Astrocyte of the cerebellum (primary cell): ENCODE measurements at regions of chr15 and their contacts with region 1.

Region 1: DNA sequence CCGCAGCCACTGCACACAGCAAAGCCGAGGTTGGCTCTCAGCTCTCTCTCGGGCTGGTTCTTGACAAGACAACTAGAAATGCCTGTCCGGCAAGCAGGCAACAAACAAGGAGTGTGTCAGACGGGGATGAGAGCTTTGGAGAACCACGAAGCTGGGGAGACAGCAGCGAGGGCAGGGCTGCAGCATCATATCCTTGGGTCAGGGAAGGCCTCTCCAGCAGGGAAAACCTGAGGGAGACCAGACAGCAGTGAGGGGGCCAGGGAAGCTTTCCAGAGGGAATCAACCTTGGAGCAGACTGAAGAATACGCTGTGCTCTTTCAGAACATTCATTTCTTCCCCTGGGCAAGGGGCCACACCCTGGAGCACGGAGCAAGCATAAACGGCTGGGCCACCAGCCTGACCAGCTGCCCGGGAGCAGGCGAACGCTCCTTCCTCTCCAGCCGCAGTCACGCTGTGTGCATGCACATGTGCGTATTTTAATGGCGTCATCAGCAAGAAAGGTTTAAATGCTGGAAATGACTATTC is 58.7 kb downstream of the CHSY1 start:
- DNase-seq: no peak
- H3K4me3 ChIP-seq: no peak overlapping the region
- CTCF ChIP-seq: no peak

Region 2: GRCh38 chr15:101251830-101252820 is 58.9 kb after region 1 on chr15 and contains the start of gene CHSY1:
- in situ Hi-C with region 1: loop called (anchors 5 kb)
- DNase-seq: peak; percentile 86
- H3K4me3 ChIP-seq: peak within 1 kb of the TSS; percentile 89
- CTCF ChIP-seq: no peak

Region 3: DNA sequence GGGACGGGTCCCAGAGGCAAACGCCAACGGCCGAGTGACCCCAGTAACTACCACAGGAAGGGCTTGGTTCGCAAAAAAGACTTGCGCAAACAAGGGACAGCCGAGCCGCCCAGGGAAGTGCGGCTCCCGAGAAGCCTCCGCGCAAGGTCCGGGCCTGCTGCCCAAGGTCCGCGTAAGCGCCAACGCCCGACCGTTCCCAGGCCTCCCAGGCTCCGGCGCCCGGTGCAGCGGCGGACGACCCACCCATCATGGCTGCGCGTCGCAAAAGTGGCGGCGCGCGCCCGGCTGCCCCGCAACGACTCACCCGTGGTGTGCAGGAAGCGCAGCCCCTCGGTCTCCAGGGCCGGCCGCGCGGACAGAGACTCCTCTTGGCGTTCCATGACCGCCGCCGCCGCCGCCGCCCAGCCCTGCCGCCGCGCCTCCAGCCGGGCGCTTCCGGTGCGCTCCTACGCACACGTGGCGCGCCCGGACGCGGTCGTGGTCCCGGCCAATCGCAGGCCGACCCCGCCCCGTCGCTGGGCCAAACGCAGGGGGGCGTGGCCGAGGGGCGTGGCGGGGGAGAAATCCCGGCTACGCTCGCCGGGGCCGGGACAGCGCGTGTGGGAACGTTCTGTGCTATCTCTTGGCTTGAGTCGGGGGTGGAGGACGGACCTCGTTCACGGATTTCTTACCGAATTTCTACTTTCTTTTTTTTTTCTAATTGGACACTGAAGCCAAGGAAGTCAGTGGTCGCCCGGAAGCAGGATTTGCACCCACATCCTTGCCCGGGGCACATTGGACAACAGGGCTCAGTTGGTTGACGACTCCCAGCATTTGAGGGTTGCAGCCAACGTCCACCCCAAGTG is 84.1 kb after region 1 on chr15 and contains the start of gene SELENOS:
- in situ Hi-C with region 1: no loop called
- DNase-seq: peak; percentile 57
- H3K4me3 ChIP-seq: peak within 1 kb of the TSS; percentile 97
- CTCF ChIP-seq: no peak